ENCODE measurements at regions of chr1 and their contacts with region 1.

Region 1: GRCh38 chr1:156860113-156860627 is 495 bp upstream of the NTRK1 start:
- DNase-seq: peak; percentile 66
- H3K4me3 Mint-ChIP-seq: peak overlapping the region; percentile 68
- H3K27ac Mint-ChIP-seq: no peak overlapping the region
- H3K4me1 Mint-ChIP-seq: peaks cover 44% of the 10 kb centered on the region
- H3K27me3 Mint-ChIP-seq: peaks cover 54% of the 10 kb centered on the region

Region 2: GRCh38 chr1:156797212-156797871 is 62.8 kb before region 1 on chr1:
- CTCF ChIA-PET with region 1: interaction called, 252 read pairs
- POLR2A ChIA-PET with region 1: interaction called, 29 read pairs
- intact Hi-C with region 1: loop called (anchors 1 kb)
- DNase-seq: peak; percentile 71
- H3K4me3 Mint-ChIP-seq: no peak overlapping the region
- H3K27ac Mint-ChIP-seq: no peak overlapping the region
- H3K4me1 Mint-ChIP-seq: peaks cover 21% of the 10 kb centered on the region
- H3K27me3 Mint-ChIP-seq: no peaks in the 10 kb centered on the region

Region 3: GRCh38 chr1:156821801-156822200 is 38.4 kb before region 1 on chr1:
- CTCF ChIA-PET with region 1: interaction called, 80 read pairs
- POLR2A ChIA-PET with region 1: interaction called, 3 read pairs
- intact Hi-C with region 1: loop called (anchors 5 kb)
- DNase-seq: peak; percentile 79
- H3K4me3 Mint-ChIP-seq: no peak overlapping the region
- H3K27ac Mint-ChIP-seq: peak overlapping the region; percentile 75
- H3K4me1 Mint-ChIP-seq: peaks cover 41% of the 10 kb centered on the region
- H3K27me3 Mint-ChIP-seq: no peaks in the 10 kb centered on the region

Region 4: DNA sequence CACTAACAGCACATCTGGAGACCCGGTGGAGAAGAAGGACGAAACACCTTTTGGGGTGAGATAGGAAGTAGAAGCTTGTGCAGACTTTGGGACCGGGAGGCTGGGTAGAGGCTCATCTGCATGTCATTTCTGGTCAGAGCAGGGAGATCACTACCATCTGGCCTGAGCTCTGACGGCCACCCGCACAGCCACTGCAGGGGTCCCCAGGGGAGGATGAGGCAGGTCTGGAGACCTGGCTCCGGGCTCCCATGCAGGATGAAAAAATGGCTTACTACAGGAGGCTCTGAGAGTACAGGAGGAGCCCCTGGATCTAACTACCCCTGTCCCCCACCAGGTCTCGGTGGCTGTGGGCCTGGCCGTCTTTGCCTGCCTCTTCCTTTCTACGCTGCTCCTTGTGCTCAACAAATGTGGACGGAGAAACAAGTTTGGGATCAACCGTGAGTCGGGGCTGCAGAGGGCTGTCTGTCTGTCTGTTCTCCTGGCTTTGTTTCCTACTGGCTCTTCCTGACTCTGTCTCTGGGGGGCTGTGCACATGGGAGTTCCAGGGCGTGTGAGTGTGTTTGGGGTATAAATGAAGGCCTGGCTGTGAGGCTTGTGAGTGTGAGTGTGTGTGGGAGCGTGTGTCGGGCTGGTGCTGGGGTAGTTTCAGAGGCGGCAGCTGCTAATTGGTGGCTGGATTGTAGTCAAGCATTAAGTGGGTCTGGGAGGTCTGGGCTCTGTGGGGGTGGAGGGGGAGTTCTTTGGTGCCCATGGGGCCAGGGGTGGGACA is 14.6 kb after region 1 on chr1:
- CTCF ChIA-PET with region 1: interaction called, 12 read pairs
- POLR2A ChIA-PET with region 1: no interaction called
- intact Hi-C with region 1: no loop called
- DNase-seq: no peak
- H3K4me3 Mint-ChIP-seq: no peak overlapping the region
- H3K27ac Mint-ChIP-seq: no peak overlapping the region
- H3K4me1 Mint-ChIP-seq: peaks cover 11% of the 10 kb centered on the region
- H3K27me3 Mint-ChIP-seq: peaks cover 14% of the 10 kb centered on the region

Region 5: GRCh38 chr1:156910309-156910782 is 50.2 kb after region 1 on chr1:
- CTCF ChIA-PET with region 1: interaction called, 10 read pairs
- POLR2A ChIA-PET with region 1: no interaction called
- intact Hi-C with region 1: no loop called
- DNase-seq: peak; percentile 70
- H3K4me3 Mint-ChIP-seq: no peak overlapping the region
- H3K27ac Mint-ChIP-seq: no peak overlapping the region
- H3K4me1 Mint-ChIP-seq: peaks cover 2% of the 10 kb centered on the region
- H3K27me3 Mint-ChIP-seq: peaks cover 18% of the 10 kb centered on the region

Region 6: DNA sequence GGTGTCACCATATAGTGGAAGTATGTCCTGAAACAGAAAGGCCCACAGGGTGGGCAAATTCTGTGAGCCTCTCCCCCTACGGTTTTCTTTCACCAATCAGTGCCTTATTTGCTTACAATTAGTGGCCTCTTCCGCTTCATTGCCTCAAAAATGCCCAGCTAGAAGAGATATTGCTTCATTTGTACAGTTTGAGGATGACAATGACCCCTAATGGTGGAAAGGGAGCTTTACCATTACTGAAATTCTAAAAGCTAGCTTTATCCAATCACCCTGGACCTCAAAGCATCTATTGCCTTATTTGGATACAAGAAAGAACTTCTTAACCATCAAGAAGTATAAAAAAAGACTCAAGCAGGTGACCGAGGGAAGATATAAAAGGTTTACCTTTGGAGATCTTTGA is 109.8 kb after region 1 on chr1:
- CTCF ChIA-PET with region 1: no interaction called
- POLR2A ChIA-PET with region 1: no interaction called
- intact Hi-C with region 1: no loop called
- DNase-seq: no peak
- H3K4me3 Mint-ChIP-seq: no peak overlapping the region
- H3K27ac Mint-ChIP-seq: no peak overlapping the region
- H3K4me1 Mint-ChIP-seq: no peaks in the 10 kb centered on the region
- H3K27me3 Mint-ChIP-seq: peaks cover 3% of the 10 kb centered on the region